ENCODE measurements at regions of chr17 and their contacts with region 1.

Region 1: DNA sequence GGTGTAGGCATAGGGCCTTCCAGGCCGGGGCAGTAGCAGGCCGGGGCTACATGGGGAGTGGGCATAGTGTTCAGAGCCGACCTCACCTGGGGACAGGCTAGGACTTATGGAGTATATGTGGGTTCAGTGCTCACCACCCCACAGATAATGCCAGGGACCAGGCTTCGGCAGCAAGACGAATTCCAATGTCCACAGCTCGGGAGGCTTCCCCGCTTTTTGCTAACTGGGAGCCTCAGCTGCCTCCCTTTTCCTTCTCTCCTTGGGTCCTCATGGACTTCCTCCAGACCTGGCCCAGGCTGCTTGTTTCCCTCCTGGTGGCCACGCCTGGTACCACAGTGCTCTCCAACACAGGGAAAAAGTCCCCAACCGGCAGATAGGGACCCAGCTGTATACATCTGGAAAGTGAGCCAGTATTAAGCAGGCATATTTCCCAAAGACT is 20.1 kb upstream of the SLC46A1 start:
- DNase-seq: no peak
- ATAC-seq: no peak
- H3K4me3 ChIP-seq: no peak overlapping the region
- H3K27ac ChIP-seq: no peak overlapping the region
- H3K4me1 ChIP-seq: no peaks in the 10 kb centered on the region
- H3K27me3 ChIP-seq: peaks cover 0 to 10% (median 0%) of the 10 kb centered on the region in 3 donors
- CTCF ChIP-seq: no peak

Region 2: GRCh38 chr17:28484296-28484695 is 58.2 kb after region 1 on chr17:
- intact Hi-C with region 1: loop called in 1 of 2 experiments (anchors 10 kb)
- DNase-seq: no peak
- ATAC-seq: no peak
- H3K4me3 ChIP-seq: no peak overlapping the region
- H3K27ac ChIP-seq: no peak overlapping the region
- H3K4me1 ChIP-seq: no peaks in the 10 kb centered on the region
- H3K27me3 ChIP-seq: peaks cover 0 to 7% (median 5%) of the 10 kb centered on the region in 3 donors
- CTCF ChIP-seq: no peak

Region 3: GRCh38 chr17:28912281-28912937 is 486.3 kb after region 1 on chr17:
- intact Hi-C with region 1: no loop called
- DNase-seq: no peak
- ATAC-seq: no peak
- H3K4me3 ChIP-seq: no peak overlapping the region
- H3K27ac ChIP-seq: no peak overlapping the region
- H3K4me1 ChIP-seq: peaks cover 26% of the 10 kb centered on the region
- H3K27me3 ChIP-seq: no peaks in the 10 kb centered on the region
- CTCF ChIP-seq: no peak